ENCODE measurements at regions of chr2 and their contacts with region 1.

Region 1: DNA sequence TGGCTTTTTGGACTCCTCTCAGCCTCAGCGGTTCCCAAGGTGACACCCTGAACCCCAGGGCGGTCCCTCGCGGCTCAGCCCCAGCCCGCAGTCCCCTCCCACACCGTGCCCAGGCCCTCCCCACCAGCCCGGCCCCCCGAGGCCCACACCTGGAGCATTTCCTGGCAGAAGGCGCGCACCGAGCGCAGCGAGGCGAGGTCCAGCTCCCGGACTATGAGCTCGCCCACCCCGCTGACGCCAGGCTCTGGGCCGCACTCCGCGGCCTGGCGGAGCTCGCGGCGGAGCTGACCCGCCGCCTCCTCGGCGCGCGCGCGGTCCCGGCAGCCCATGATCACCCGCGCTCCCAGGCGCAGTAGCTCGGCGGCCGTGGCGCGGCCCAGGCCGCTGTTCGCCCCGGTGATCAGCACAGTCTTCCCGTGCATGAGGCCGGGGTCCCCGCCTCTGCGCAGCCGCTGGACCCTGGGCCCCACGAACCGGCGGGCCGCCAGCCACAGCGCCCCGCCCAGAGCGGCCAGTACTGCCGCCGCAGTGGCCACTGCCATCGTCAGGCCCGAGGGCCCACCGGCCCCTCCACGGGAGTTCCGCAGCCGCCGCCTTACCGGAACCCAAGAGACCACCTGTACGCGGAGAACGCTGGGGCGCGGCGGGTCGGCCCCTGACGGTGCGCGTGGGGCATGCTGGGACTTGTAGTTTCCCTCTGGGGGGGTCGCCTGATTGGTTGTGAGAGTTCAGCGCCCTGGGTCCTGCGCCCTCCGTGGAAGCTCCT is at the start of gene RDH14:
- DNase-seq: peak; percentile 94
- ATAC-seq: peak; percentile 90
- H3K4me3 ChIP-seq: peak within 1 kb of the TSS; percentile 34 to 79 (median 69)
- H3K4me3 Mint-ChIP-seq: peak within 1 kb of the TSS; percentile 93
- H3K27ac ChIP-seq: peak within 1 kb of the TSS; percentile 71 to 93
- H3K27ac Mint-ChIP-seq: peak within 1 kb of the TSS; percentile 94
- H3K4me1 ChIP-seq: peaks cover 12 to 13% of the 10 kb centered on the region in 2 donors
- H3K4me1 Mint-ChIP-seq: peaks cover 39% of the 10 kb centered on the region
- H3K27me3 ChIP-seq: no peaks in the 10 kb centered on the region
- H3K27me3 Mint-ChIP-seq: no peaks in the 10 kb centered on the region
- CTCF ChIP-seq: no peak
- total RNA-seq, gene RDH14: 18.5 and 19.4 TPM in 2 replicates

Region 2: GRCh38 chr2:18520451-18521425 is 39.5 kb before region 1 on chr2:
- CTCF ChIA-PET with region 1: interaction called, 16 read pairs
- POLR2A ChIA-PET with region 1: no interaction called
- intact Hi-C with region 1: no loop called
- DNase-seq: peak; percentile 71
- ATAC-seq: peak; percentile 53
- H3K4me3 ChIP-seq: no peak overlapping the region
- H3K4me3 Mint-ChIP-seq: no peak overlapping the region
- H3K27ac ChIP-seq: no peak overlapping the region
- H3K27ac Mint-ChIP-seq: no peak overlapping the region
- H3K4me1 ChIP-seq: no peaks in the 10 kb centered on the region
- H3K4me1 Mint-ChIP-seq: no peaks in the 10 kb centered on the region
- H3K27me3 ChIP-seq: peaks cover 0 to 13% (median 2%) of the 10 kb centered on the region in 4 experiments
- H3K27me3 Mint-ChIP-seq: peaks cover 22% of the 10 kb centered on the region
- CTCF ChIP-seq: peak; percentile 82

Region 3: GRCh38 chr2:18749912-18750526 is 189.8 kb after region 1 on chr2:
- CTCF ChIA-PET with region 1: no interaction called
- POLR2A ChIA-PET with region 1: no interaction called
- intact Hi-C with region 1: no loop called
- DNase-seq: peak; percentile 36
- ATAC-seq: no peak
- H3K4me3 ChIP-seq: no peak overlapping the region
- H3K4me3 Mint-ChIP-seq: no peak overlapping the region
- H3K27ac ChIP-seq: no peak overlapping the region
- H3K27ac Mint-ChIP-seq: no peak overlapping the region
- H3K4me1 ChIP-seq: no peaks in the 10 kb centered on the region
- H3K4me1 Mint-ChIP-seq: no peaks in the 10 kb centered on the region
- H3K27me3 ChIP-seq: no peaks in the 10 kb centered on the region
- H3K27me3 Mint-ChIP-seq: no peaks in the 10 kb centered on the region
- CTCF ChIP-seq: peak; percentile 70

Region 4: GRCh38 chr2:19347619-19348562 is 787.7 kb after region 1 on chr2:
- CTCF ChIA-PET with region 1: interaction called, 3 read pairs
- POLR2A ChIA-PET with region 1: interaction called, 7 read pairs
- intact Hi-C with region 1: loop called (anchors 1 kb)
- DNase-seq: peak; percentile 99
- ATAC-seq: peak; percentile 89
- H3K4me3 ChIP-seq: peak overlapping the region; percentile 69 to 99 (median 85)
- H3K4me3 Mint-ChIP-seq: peak overlapping the region; percentile 94
- H3K27ac ChIP-seq: peak overlapping the region; percentile 86 to 92
- H3K27ac Mint-ChIP-seq: peak overlapping the region; percentile 99
- H3K4me1 ChIP-seq: peaks cover 43 to 46% of the 10 kb centered on the region in 2 donors
- H3K4me1 Mint-ChIP-seq: peaks cover 30% of the 10 kb centered on the region
- H3K27me3 ChIP-seq: peaks cover 0 to 47% (median 36%) of the 10 kb centered on the region in 4 experiments
- H3K27me3 Mint-ChIP-seq: peaks cover 30% of the 10 kb centered on the region
- CTCF ChIP-seq: no peak

Region 5: DNA sequence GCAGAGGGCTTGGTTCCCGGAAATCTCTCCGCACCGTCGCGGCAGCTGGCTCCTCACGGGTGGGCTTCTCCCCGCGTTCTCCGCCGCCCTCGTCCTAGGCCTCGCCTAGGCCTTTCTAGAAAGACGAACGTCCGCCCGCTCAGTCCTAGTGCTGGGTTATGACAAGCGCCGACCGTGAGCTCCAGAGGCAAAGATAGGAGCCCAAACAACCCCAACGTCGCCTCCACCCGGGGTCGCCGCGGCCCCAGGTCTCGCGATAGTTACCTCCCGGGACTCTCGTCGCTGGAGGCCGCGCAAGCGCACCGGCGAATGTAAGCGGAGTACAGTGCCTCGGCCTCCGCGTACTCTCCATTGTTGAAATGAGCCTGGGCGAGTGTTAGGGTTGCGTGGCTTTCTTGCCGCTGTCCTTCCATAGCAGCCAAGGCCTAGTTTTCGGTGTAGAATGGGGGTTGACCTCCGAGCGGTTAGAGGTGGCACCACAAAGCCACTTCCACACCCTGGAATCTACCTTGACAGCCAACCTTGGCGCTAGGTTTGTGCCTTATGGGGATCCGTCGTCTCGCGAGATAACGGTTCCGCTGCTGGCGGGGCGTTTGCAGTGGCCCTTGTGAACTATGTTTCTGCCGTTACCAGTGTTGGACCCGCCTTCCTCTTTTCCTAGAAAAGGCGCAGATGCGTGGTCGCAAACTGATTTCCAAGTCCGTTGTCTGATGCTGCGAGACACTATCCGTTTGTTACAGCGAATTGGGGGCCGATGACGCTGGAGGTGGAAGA is 1341.4 kb after region 1 on chr2 and contains the start of gene TTC32:
- CTCF ChIA-PET with region 1: no interaction called
- POLR2A ChIA-PET with region 1: no interaction called
- intact Hi-C with region 1: loop called (anchors 1 kb)
- DNase-seq: peak; percentile 98
- ATAC-seq: peak; percentile 89
- H3K4me3 ChIP-seq: peak within 1 kb of the TSS; percentile 79 to 99 (median 93)
- H3K4me3 Mint-ChIP-seq: peak within 1 kb of the TSS; percentile 99
- H3K27ac ChIP-seq: peak within 1 kb of the TSS; percentile 92 to 94
- H3K27ac Mint-ChIP-seq: peak within 1 kb of the TSS; percentile 99
- H3K4me1 ChIP-seq: peaks cover 19 to 33% of the 10 kb centered on the region in 2 donors
- H3K4me1 Mint-ChIP-seq: peaks cover 44% of the 10 kb centered on the region
- H3K27me3 ChIP-seq: no peaks in the 10 kb centered on the region
- H3K27me3 Mint-ChIP-seq: peaks cover 3% of the 10 kb centered on the region
- CTCF ChIP-seq: no peak
- total RNA-seq, gene TTC32: 38.1 TPM in 2 replicates

Region 6: GRCh38 chr2:20051532-20052228 is 1491.5 kb after region 1 on chr2 and contains the start of gene LAPTM4A:
- CTCF ChIA-PET with region 1: no interaction called
- POLR2A ChIA-PET with region 1: no interaction called
- intact Hi-C with region 1: loop called (anchors 1 kb)
- DNase-seq: peak; percentile 99
- ATAC-seq: peak; percentile 89
- H3K4me3 ChIP-seq: peak within 1 kb of the TSS; percentile 49 to 99 (median 85)
- H3K4me3 Mint-ChIP-seq: no peak within 1 kb of the TSS
- H3K27ac ChIP-seq: peak within 1 kb of the TSS; percentile 88 to 98
- H3K27ac Mint-ChIP-seq: no peak within 1 kb of the TSS
- H3K4me1 ChIP-seq: peaks cover 25 to 28% of the 10 kb centered on the region in 2 donors
- H3K4me1 Mint-ChIP-seq: peaks cover 30% of the 10 kb centered on the region
- H3K27me3 ChIP-seq: peaks cover 0 to 15% (median 7%) of the 10 kb centered on the region in 4 experiments
- H3K27me3 Mint-ChIP-seq: peaks cover 14% of the 10 kb centered on the region
- CTCF ChIP-seq: no peak
- total RNA-seq, gene LAPTM4A: 70.1 and 74.4 TPM in 2 replicates

Measured in B cell (primary cell).